ENCODE measurements at regions of chr20 and their contacts with region 1.

Region 1: GRCh38 chr20:43558412-43559146 is at the start of gene SGK2:
- DNase-seq: peak; percentile 96
- ATAC-seq: peak; percentile 85
- H3K4me3 ChIP-seq: peak within 1 kb of the TSS; percentile 68 to 85 (median 84)
- H3K27ac ChIP-seq: peak within 1 kb of the TSS; percentile 99
- H3K4me1 ChIP-seq: peaks cover 62% of the 10 kb centered on the region
- H3K27me3 ChIP-seq: no peaks in the 10 kb centered on the region; a peak in 1 of 5 replicates
- CTCF ChIP-seq: peak; percentile 30; the same call in 1 of the 2 replicates
- EP300 ChIP-seq: peak; percentile 44 to 57; a peak in 2 of 4 replicates
- POLR2A ChIP-seq: peak; percentile 87 to 97
- RAD21 ChIP-seq: peak; percentile 23; the same call in 1 of the 2 replicates
- total RNA-seq, gene SGK2: 29.4 and 34.3 TPM in 2 replicates

Region 2: GRCh38 chr20:43456809-43457639 is 101.6 kb before region 1 on chr20:
- CTCF ChIA-PET with region 1: no interaction called
- POLR2A ChIA-PET with region 1: interaction called, 83 read pairs
- in situ Hi-C with region 1: no loop called
- intact Hi-C with region 1: loop called (anchors 5 kb)
- DNase-seq: peak; percentile 97
- ATAC-seq: peak; percentile 90
- H3K4me3 ChIP-seq: peak overlapping the region; percentile 86 to 96 (median 90)
- H3K27ac ChIP-seq: peak overlapping the region; percentile 97
- H3K4me1 ChIP-seq: peaks cover 59% of the 10 kb centered on the region
- H3K27me3 ChIP-seq: peaks cover 0 to 2% of the 10 kb centered on the region in 2 experiments; a peak in 1 of 5 replicates
- CTCF ChIP-seq: 0 out of 2 replicates have a peak, but pooled peaks have one; percentile 14
- EP300 ChIP-seq: no peak
- POLR2A ChIP-seq: peak in 1 of 2 experiments; percentile 72; a peak in 2 of 4 replicates
- RAD21 ChIP-seq: no peak

Region 3: GRCh38 chr20:43530321-43531090 is 28.1 kb before region 1 on chr20:
- CTCF ChIA-PET with region 1: no interaction called
- POLR2A ChIA-PET with region 1: interaction called, 224 read pairs
- in situ Hi-C with region 1: no loop called
- intact Hi-C with region 1: no loop called
- DNase-seq: peak; percentile 91
- ATAC-seq: peak; percentile 89
- H3K4me3 ChIP-seq: no peak overlapping the region
- H3K27ac ChIP-seq: peak overlapping the region; percentile 65
- H3K4me1 ChIP-seq: peaks cover 39% of the 10 kb centered on the region
- H3K27me3 ChIP-seq: no peaks in the 10 kb centered on the region
- CTCF ChIP-seq: peak; percentile 44
- EP300 ChIP-seq: peak in 1 of 2 experiments; percentile 43; a peak in 1 of 4 replicates
- POLR2A ChIP-seq: no peak
- RAD21 ChIP-seq: peak; percentile 58

Region 4: GRCh38 chr20:43576108-43576507 is 17.5 kb after region 1 on chr20:
- CTCF ChIA-PET with region 1: no interaction called
- POLR2A ChIA-PET with region 1: interaction called, 109 read pairs
- in situ Hi-C with region 1: no loop called
- intact Hi-C with region 1: no loop called
- DNase-seq: no peak
- ATAC-seq: no peak
- H3K4me3 ChIP-seq: no peak overlapping the region
- H3K27ac ChIP-seq: no peak overlapping the region
- H3K4me1 ChIP-seq: peaks cover 25% of the 10 kb centered on the region
- H3K27me3 ChIP-seq: no peaks in the 10 kb centered on the region
- CTCF ChIP-seq: no peak
- EP300 ChIP-seq: no peak
- POLR2A ChIP-seq: no peak
- RAD21 ChIP-seq: no peak

Region 5: GRCh38 chr20:43590392-43591323 is 32.1 kb after region 1 on chr20 and contains the start of gene IFT52:
- CTCF ChIA-PET with region 1: no interaction called
- POLR2A ChIA-PET with region 1: interaction called, 182 read pairs
- in situ Hi-C with region 1: no loop called
- intact Hi-C with region 1: loop called (anchors 1 kb)
- DNase-seq: peak; percentile 93
- ATAC-seq: peak; percentile 98
- H3K4me3 ChIP-seq: peak within 1 kb of the TSS; percentile 84 to 89 (median 86)
- H3K27ac ChIP-seq: peak within 1 kb of the TSS; percentile 79
- H3K4me1 ChIP-seq: peaks cover 32% of the 10 kb centered on the region
- H3K27me3 ChIP-seq: no peaks in the 10 kb centered on the region
- CTCF ChIP-seq: peak; percentile 35
- EP300 ChIP-seq: peak; percentile 17 to 39; a peak in 2 of 4 replicates
- POLR2A ChIP-seq: peak; percentile 53 to 88; a peak in 3 of 4 replicates
- RAD21 ChIP-seq: peak; percentile 37; the same call in 1 of the 2 replicates
- total RNA-seq, gene IFT52: 64.0 and 80.6 TPM in 2 replicates

Region 6: GRCh38 chr20:43691928-43692524 is 133.4 kb after region 1 on chr20:
- CTCF ChIA-PET with region 1: interaction called, 3 read pairs
- POLR2A ChIA-PET with region 1: interaction called, 5 read pairs
- in situ Hi-C with region 1: no loop called
- intact Hi-C with region 1: loop called (anchors 1 kb)
- DNase-seq: peak; percentile 72
- ATAC-seq: peak; percentile 92
- H3K4me3 ChIP-seq: no peak overlapping the region
- H3K27ac ChIP-seq: no peak overlapping the region
- H3K4me1 ChIP-seq: no peaks in the 10 kb centered on the region
- H3K27me3 ChIP-seq: no peaks in the 10 kb centered on the region
- CTCF ChIP-seq: peak; percentile 93
- EP300 ChIP-seq: no peak
- POLR2A ChIP-seq: no peak
- RAD21 ChIP-seq: peak; percentile 93

Measured in HepG2 (cell line).